Activated CD4-positive, alpha-beta T cell treated with anti-CD3 and anti-CD28 coated beads, Interleukin-2, amount 10 ng/mL, durations not matched to agents 24 days and 14 days (primary cell): ENCODE measurements at regions of chr9 and their contacts with region 1.

Region 1: DNA sequence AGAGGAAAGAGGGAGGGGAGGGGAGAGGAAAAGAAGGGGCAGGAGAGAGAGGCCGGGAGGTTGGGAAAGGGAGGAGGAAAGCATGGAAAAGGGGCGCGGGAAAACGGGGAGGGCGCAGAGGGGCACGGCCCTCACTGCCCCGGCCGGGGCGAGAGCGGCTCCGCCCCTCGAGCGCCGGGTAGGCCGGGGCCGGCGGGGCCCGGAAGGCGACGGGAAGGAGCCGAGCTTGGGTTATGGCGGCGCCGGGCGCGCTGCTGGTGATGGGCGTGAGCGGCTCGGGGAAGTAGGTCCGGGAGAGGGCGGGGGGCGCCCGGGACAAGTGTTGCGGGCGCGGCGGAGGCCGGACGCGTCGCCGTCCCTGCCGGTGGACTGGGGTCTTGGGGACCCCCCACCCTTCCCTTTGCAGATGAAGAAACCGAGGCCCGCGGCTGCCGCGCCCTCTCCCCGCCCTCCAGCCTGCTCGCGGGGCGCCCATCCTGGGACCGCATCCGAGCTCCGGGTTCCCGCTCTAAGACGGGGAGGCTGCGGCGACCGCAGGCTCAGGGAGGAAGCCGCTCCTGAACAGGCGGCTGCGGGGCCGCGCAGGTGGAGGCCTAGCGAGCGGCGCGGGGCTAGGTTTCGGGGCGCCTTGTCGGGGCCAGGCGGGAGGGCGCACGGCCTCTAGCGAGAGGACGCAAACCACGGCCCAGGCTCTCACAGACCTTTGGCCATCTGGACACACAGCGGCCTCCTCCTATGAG is at the start of gene IDNK:
- DNase-seq: peak; percentile 92
- H3K4me3 Mint-ChIP-seq: peak within 1 kb of the TSS; percentile 79
- H3K27ac Mint-ChIP-seq: peak within 1 kb of the TSS; percentile 95
- H3K4me1 Mint-ChIP-seq: peaks cover 23% of the 10 kb centered on the region
- H3K27me3 Mint-ChIP-seq: peaks cover 7% of the 10 kb centered on the region
- total RNA-seq, gene IDNK: 4.5 and 5.1 TPM in 2 replicates

Region 2: GRCh38 chr9:83598487-83598886 is 24.6 kb before region 1 on chr9:
- intact Hi-C with region 1: no loop called
- DNase-seq: no peak
- H3K4me3 Mint-ChIP-seq: no peak overlapping the region
- H3K27ac Mint-ChIP-seq: no peak overlapping the region
- H3K4me1 Mint-ChIP-seq: no peaks in the 10 kb centered on the region
- H3K27me3 Mint-ChIP-seq: no peaks in the 10 kb centered on the region

Region 3: GRCh38 chr9:83649080-83649479 is 26.0 kb after region 1 on chr9:
- intact Hi-C with region 1: loop called (anchors 1 kb)
- DNase-seq: peak; percentile 91
- H3K4me3 Mint-ChIP-seq: no peak overlapping the region
- H3K27ac Mint-ChIP-seq: no peak overlapping the region
- H3K4me1 Mint-ChIP-seq: peaks cover 3% of the 10 kb centered on the region
- H3K27me3 Mint-ChIP-seq: no peaks in the 10 kb centered on the region

Region 4: GRCh38 chr9:83707768-83708514 is 84.8 kb after region 1 on chr9 and contains the start of gene UBQLN1:
- intact Hi-C with region 1: loop called (anchors 1 kb)
- DNase-seq: peak; percentile 97
- H3K4me3 Mint-ChIP-seq: peak within 1 kb of the TSS; percentile 87
- H3K27ac Mint-ChIP-seq: peak within 1 kb of the TSS; percentile 99
- H3K4me1 Mint-ChIP-seq: peaks cover 26% of the 10 kb centered on the region
- H3K27me3 Mint-ChIP-seq: no peaks in the 10 kb centered on the region
- total RNA-seq, gene UBQLN1: 131 and 144 TPM in 2 replicates

Region 5: GRCh38 chr9:83794051-83794450 is 170.9 kb after region 1 on chr9:
- intact Hi-C with region 1: loop called (anchors 10 kb)
- DNase-seq: no peak
- H3K4me3 Mint-ChIP-seq: no peak overlapping the region
- H3K27ac Mint-ChIP-seq: no peak overlapping the region
- H3K4me1 Mint-ChIP-seq: peaks cover 5% of the 10 kb centered on the region
- H3K27me3 Mint-ChIP-seq: no peaks in the 10 kb centered on the region

Region 6: GRCh38 chr9:83935276-83935890 is 312.3 kb after region 1 on chr9:
- intact Hi-C with region 1: no loop called
- DNase-seq: no peak
- H3K4me3 Mint-ChIP-seq: no peak overlapping the region
- H3K27ac Mint-ChIP-seq: no peak overlapping the region
- H3K4me1 Mint-ChIP-seq: peaks cover 21% of the 10 kb centered on the region
- H3K27me3 Mint-ChIP-seq: no peaks in the 10 kb centered on the region

Region 7: DNA sequence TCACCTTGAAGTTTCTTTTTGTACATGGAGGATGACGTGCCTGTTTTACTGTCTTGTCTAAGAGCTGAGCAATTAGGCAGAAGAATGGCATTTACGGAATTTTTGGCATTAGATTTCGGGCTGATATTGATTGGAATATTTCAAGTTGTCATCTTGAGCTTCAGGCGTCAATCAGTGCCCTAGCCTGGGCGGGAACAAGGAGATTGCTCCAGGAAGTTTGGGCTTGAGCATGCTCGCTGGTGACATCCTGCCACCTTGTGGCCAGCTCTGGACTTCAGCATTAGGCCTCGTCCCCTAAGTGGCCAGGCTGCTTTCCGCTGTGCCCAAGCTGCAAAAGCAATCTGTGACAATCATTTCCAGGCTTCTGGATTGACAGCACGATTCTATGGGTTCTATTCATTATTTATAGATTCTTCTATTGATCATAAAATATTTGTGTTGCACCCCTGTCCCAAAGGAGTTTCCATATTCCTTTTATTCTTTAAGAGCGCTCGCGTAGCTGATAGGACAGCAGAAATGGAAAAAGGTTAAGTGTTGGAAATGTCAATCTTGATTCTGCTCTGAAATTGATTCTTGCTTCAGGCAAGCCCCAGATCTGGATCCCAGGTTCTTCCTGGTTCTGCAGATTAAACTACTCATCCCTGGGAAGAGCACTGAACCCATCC is 638.1 kb after region 1 on chr9:
- intact Hi-C with region 1: loop called (anchors 2 kb)
- DNase-seq: peak; percentile 86
- H3K4me3 Mint-ChIP-seq: peak overlapping the region; percentile 44
- H3K27ac Mint-ChIP-seq: no peak overlapping the region
- H3K4me1 Mint-ChIP-seq: peaks cover 9% of the 10 kb centered on the region
- H3K27me3 Mint-ChIP-seq: peaks cover 14% of the 10 kb centered on the region